HCT116 (cell line): ENCODE measurements at regions of chr13 and their contacts with region 1.

Region 1: DNA sequence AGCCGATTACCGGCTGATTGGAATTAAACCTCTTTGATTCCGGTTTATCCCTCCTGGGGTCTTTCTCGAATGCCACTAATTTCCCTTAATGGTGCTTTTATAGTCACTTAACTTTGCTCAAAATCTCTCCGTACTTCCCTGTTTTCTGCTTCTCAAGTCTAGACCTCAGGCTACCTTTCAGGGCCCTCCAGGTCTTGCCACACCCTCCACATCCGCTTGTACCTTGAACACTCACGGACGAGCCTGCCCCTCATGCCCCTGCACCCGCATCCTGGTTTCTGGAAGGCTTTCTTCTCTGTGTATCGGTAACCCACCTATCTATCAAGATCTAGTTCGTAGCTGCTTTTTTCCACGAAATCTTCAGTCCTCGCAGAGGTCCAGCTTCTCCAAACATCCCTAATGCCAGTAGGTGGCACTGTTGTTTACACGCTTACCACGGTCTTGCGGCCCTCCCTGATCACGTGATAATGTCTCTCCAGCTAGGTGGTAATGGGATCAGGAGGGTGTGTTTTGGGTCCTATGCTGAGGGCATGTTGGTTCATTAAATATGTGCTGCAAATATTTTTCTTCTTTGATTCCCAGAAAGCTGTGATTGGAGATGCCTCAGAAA is 13.8 kb downstream of the ATP12A start:
- DNase-seq: peak; percentile 74
- ATAC-seq: peak; percentile 99
- H3K4me3 ChIP-seq: peak overlapping the region in 1 of 2 experiments; percentile 32; a peak in 2 of 4 replicates
- H3K27ac ChIP-seq: no peak overlapping the region
- H3K4me1 ChIP-seq: peaks cover 0 to 4% of the 10 kb centered on the region in 2 experiments; a peak in 3 of 4 replicates
- H3K27me3 ChIP-seq: peaks cover 1% of the 10 kb centered on the region; the same call in 1 of the 2 replicates
- CTCF ChIP-seq: peak; percentile 69 to 88 (median 82)
- POLR2A ChIP-seq: no peak
- RAD21 ChIP-seq: peak; percentile 69

Region 2: DNA sequence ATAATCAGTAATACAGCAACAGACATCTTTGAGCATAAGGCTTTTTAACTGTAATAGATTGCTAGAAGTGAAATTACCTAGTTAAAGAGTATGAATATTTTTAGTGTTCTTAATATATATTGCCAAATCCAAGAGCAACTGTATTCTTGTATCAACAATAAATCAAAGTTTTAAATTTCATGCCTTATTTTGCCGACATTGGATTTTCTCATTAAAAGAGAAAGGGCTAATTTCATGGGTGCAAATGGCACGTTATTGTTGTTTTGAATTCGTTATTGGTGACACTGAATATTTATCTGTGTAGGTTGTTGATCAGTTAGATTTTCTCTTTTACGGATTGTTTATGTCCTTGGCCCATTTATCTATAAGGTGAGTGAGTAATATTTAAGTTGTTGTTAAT is 287.4 kb before region 1 on chr13:
- CTCF ChIA-PET with region 1: no interaction called
- POLR2A ChIA-PET with region 1: no interaction called
- RAD21 ChIA-PET with region 1: no interaction called
- intact Hi-C with region 1: no loop called
- DNase-seq: no peak
- ATAC-seq: no peak
- H3K4me3 ChIP-seq: no peak overlapping the region
- H3K27ac ChIP-seq: no peak overlapping the region
- H3K4me1 ChIP-seq: no peaks in the 10 kb centered on the region
- H3K27me3 ChIP-seq: no peaks in the 10 kb centered on the region
- CTCF ChIP-seq: no peak
- POLR2A ChIP-seq: no peak
- RAD21 ChIP-seq: no peak

Region 3: GRCh38 chr13:24713022-24713421 is 19.1 kb after region 1 on chr13:
- CTCF ChIA-PET with region 1: interaction called, 14 read pairs
- POLR2A ChIA-PET with region 1: no interaction called
- RAD21 ChIA-PET with region 1: no interaction called
- intact Hi-C with region 1: no loop called
- DNase-seq: no peak
- ATAC-seq: no peak
- H3K4me3 ChIP-seq: no peak overlapping the region
- H3K27ac ChIP-seq: no peak overlapping the region
- H3K4me1 ChIP-seq: no peaks in the 10 kb centered on the region
- H3K27me3 ChIP-seq: no peaks in the 10 kb centered on the region
- CTCF ChIP-seq: no peak
- POLR2A ChIP-seq: no peak
- RAD21 ChIP-seq: no peak